ENCODE measurements at regions of chr10 and their contacts with region 1.

Region 1: GRCh38 chr10:32379950-32380551 is 33.1 kb upstream of the EPC1 start:
- DNase-seq: no peak
- H3K4me3 ChIP-seq: no peak overlapping the region
- H3K27ac ChIP-seq: peak overlapping the region; percentile 80
- H3K4me1 ChIP-seq: peaks cover 5% of the 10 kb centered on the region
- H3K27me3 ChIP-seq: no peaks in the 10 kb centered on the region
- CTCF ChIP-seq: no peak

Region 2: DNA sequence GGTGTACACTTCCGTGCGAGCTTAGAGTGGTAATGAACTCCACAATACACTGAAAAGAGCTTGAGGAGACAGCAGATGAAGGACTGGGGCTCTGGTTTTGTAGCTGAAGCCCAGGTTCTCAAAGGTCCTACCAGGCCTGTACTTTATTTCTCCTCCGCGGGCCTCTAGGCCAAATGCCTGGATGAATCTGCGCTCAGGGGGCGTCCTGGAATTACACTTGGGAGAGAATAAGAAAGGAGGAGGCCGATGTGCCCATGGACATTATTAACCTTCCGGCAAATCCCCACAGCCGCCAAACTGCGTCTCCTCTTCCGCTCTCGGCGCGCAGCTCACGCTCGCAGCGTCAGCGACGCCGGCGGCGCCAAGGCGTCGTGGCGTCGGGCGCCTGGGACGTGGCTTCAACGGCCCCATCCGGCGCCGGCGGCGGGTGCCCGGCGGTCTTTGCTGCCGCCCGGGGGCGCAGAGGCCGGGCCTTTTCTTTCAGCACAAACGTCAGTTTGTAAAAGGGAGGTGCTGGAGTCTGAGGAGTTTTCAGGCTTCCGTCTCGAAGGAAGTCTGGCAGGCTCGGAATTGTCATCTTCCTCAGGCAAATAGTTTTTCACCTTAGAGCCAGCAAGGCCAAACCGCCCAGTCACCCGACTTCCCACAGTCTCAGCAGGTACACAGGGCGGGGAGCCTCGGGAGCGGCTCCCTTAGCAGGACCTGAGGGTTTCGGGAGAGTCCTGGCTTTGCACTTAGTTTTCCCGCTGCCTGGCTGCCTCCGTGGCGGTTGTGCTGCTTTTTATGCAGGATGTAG is 65.9 kb after region 1 on chr10 and contains the start of gene CCDC7:
- intact Hi-C with region 1: loop called (anchors 5 kb)
- DNase-seq: peak; percentile 85
- H3K4me3 ChIP-seq: peak within 1 kb of the TSS; percentile 54
- H3K27ac ChIP-seq: peak within 1 kb of the TSS; percentile 96
- H3K4me1 ChIP-seq: no peaks in the 10 kb centered on the region
- H3K27me3 ChIP-seq: no peaks in the 10 kb centered on the region
- CTCF ChIP-seq: peak; percentile 46
- total RNA-seq, gene CCDC7: 9.9 TPM

Measured in colonic mucosa (tissue), 4 donors.